ENCODE measurements at regions of chr15 and their contacts with region 1.

Region 1: GRCh38 chr15:30770759-30771158 is 133.0 kb upstream of the FAN1 start:
- DNase-seq: no peak
- H3K4me3 ChIP-seq: no peak overlapping the region
- H3K27ac ChIP-seq: no peak overlapping the region
- H3K4me1 ChIP-seq: no peaks in the 10 kb centered on the region
- H3K27me3 ChIP-seq: no peaks in the 10 kb centered on the region
- CTCF ChIP-seq: no peak
- EP300 ChIP-seq: no peak
- POLR2A ChIP-seq: no peak

Region 2: GRCh38 chr15:30650012-30650929 is 120.5 kb before region 1 on chr15:
- in situ Hi-C with region 1: loop called (anchors 25 kb)
- intact Hi-C with region 1: no loop called
- DNase-seq: no peak
- H3K4me3 ChIP-seq: no peak overlapping the region
- H3K27ac ChIP-seq: no peak overlapping the region
- H3K4me1 ChIP-seq: no peaks in the 10 kb centered on the region
- H3K27me3 ChIP-seq: no peaks in the 10 kb centered on the region
- CTCF ChIP-seq: no peak
- EP300 ChIP-seq: no peak
- POLR2A ChIP-seq: no peak

Region 3: GRCh38 chr15:30903497-30904201 is 132.9 kb after region 1 on chr15 and contains the start of gene FAN1:
- in situ Hi-C with region 1: no loop called
- intact Hi-C with region 1: no loop called
- DNase-seq: peak; percentile 92
- H3K4me3 ChIP-seq: peak within 1 kb of the TSS; percentile 42 to 75 (median 66)
- H3K27ac ChIP-seq: peak within 1 kb of the TSS; percentile 77 to 86 (median 84)
- H3K4me1 ChIP-seq: peaks cover 0 to 30% (median 8%) of the 10 kb centered on the region in 4 donors
- H3K27me3 ChIP-seq: no peaks in the 10 kb centered on the region
- CTCF ChIP-seq: peak in 2 of 5 experiments; percentile 2 to 6
- EP300 ChIP-seq: no peak
- POLR2A ChIP-seq: peak; percentile 57
- total RNA-seq, gene FAN1: 8.6 to 34.8 (median 16.9) TPM

Region 4: GRCh38 chr15:31402511-31403056 is 631.8 kb after region 1 on chr15:
- in situ Hi-C with region 1: no loop called
- intact Hi-C with region 1: no loop called
- DNase-seq: no peak
- H3K4me3 ChIP-seq: no peak overlapping the region
- H3K27ac ChIP-seq: no peak overlapping the region
- H3K4me1 ChIP-seq: peaks cover 9 to 27% (median 13%) of the 10 kb centered on the region in 4 donors
- H3K27me3 ChIP-seq: no peaks in the 10 kb centered on the region
- CTCF ChIP-seq: no peak
- EP300 ChIP-seq: no peak
- POLR2A ChIP-seq: no peak

Region 5: GRCh38 chr15:31598620-31599019 is 827.9 kb after region 1 on chr15:
- in situ Hi-C with region 1: no loop called
- intact Hi-C with region 1: no loop called
- DNase-seq: peak; percentile 37
- H3K4me3 ChIP-seq: no peak overlapping the region
- H3K27ac ChIP-seq: no peak overlapping the region
- H3K4me1 ChIP-seq: peaks cover 0 to 8% (median 3%) of the 10 kb centered on the region in 4 donors
- H3K27me3 ChIP-seq: no peaks in the 10 kb centered on the region
- CTCF ChIP-seq: no peak
- EP300 ChIP-seq: no peak
- POLR2A ChIP-seq: no peak